ENCODE measurements at regions of chr3 and their contacts with region 1.

Region 1: DNA sequence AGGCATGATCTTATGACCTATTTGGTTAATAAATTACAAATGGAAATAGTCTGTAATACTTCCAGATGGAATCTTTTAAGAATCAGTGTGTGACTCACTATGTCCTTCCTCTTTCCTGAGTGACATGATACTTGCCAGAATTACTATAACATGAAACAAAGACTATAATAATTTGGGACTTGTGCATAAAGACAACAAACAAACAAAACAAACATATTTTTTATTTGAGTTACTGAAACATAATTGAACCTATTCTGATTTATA is 1268.1 kb downstream of the OTOL1 start:
- DNase-seq: no peak
- H3K4me3 Mint-ChIP-seq: no peak overlapping the region
- H3K27ac Mint-ChIP-seq: no peak overlapping the region
- H3K4me1 Mint-ChIP-seq: no peaks in the 10 kb centered on the region
- H3K27me3 Mint-ChIP-seq: no peaks in the 10 kb centered on the region

Region 2: GRCh38 chr3:162699291-162699690 is 65.4 kb before region 1 on chr3:
- intact Hi-C with region 1: loop called (anchors 2 kb)
- DNase-seq: no peak
- H3K4me3 Mint-ChIP-seq: no peak overlapping the region
- H3K27ac Mint-ChIP-seq: no peak overlapping the region
- H3K4me1 Mint-ChIP-seq: no peaks in the 10 kb centered on the region
- H3K27me3 Mint-ChIP-seq: no peaks in the 10 kb centered on the region

Region 3: GRCh38 chr3:162738784-162739183 is 26.0 kb before region 1 on chr3:
- intact Hi-C with region 1: no loop called
- DNase-seq: no peak
- H3K4me3 Mint-ChIP-seq: no peak overlapping the region
- H3K27ac Mint-ChIP-seq: no peak overlapping the region
- H3K4me1 Mint-ChIP-seq: no peaks in the 10 kb centered on the region
- H3K27me3 Mint-ChIP-seq: no peaks in the 10 kb centered on the region

Region 4: GRCh38 chr3:163011590-163011989 is 246.8 kb after region 1 on chr3:
- intact Hi-C with region 1: no loop called
- DNase-seq: no peak
- H3K4me3 Mint-ChIP-seq: no peak overlapping the region
- H3K27ac Mint-ChIP-seq: no peak overlapping the region
- H3K4me1 Mint-ChIP-seq: no peaks in the 10 kb centered on the region
- H3K27me3 Mint-ChIP-seq: no peaks in the 10 kb centered on the region